ENCODE measurements at regions of chr17 and their contacts with region 1.

Region 1: GRCh38 chr17:6913608-6914443 is 82.0 kb upstream of the ALOX12 start:
- DNase-seq: peak; percentile 78
- H3K4me3 Mint-ChIP-seq: peak overlapping the region; percentile 52
- H3K27ac Mint-ChIP-seq: peak overlapping the region; percentile 25
- H3K4me1 Mint-ChIP-seq: peaks cover 33% of the 10 kb centered on the region
- H3K27me3 Mint-ChIP-seq: peaks cover 30% of the 10 kb centered on the region

Region 2: DNA sequence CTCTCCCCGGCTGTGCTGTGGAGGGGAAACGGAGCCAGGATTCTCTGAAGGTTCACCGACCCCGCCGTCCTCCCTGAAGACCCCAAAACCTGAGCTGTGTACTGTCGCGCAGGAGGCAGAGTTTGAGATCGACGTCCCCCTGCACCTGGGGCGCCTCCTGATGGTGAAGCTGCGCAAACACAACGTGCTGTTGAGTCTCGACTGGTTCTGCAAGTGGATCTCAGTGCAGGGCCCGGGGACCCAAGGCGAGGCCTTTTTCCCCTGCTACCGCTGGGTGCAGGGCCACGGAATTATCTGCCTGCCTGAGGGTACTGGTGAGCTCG is 19.7 kb before region 1 on chr17:
- CTCF ChIA-PET with region 1: interaction called, 10 read pairs
- POLR2A ChIA-PET with region 1: no interaction called
- DNase-seq: peak; percentile 16
- H3K4me3 Mint-ChIP-seq: no peak overlapping the region
- H3K27ac Mint-ChIP-seq: no peak overlapping the region
- H3K4me1 Mint-ChIP-seq: no peaks in the 10 kb centered on the region
- H3K27me3 Mint-ChIP-seq: peaks cover 41% of the 10 kb centered on the region

Region 3: GRCh38 chr17:7004398-7005253 is 90.8 kb after region 1 on chr17:
- CTCF ChIA-PET with region 1: interaction called, 29 read pairs
- POLR2A ChIA-PET with region 1: no interaction called
- DNase-seq: peak; percentile 70
- H3K4me3 Mint-ChIP-seq: no peak overlapping the region
- H3K27ac Mint-ChIP-seq: peak overlapping the region; percentile 15
- H3K4me1 Mint-ChIP-seq: peaks cover 23% of the 10 kb centered on the region
- H3K27me3 Mint-ChIP-seq: no peaks in the 10 kb centered on the region

Region 4: DNA sequence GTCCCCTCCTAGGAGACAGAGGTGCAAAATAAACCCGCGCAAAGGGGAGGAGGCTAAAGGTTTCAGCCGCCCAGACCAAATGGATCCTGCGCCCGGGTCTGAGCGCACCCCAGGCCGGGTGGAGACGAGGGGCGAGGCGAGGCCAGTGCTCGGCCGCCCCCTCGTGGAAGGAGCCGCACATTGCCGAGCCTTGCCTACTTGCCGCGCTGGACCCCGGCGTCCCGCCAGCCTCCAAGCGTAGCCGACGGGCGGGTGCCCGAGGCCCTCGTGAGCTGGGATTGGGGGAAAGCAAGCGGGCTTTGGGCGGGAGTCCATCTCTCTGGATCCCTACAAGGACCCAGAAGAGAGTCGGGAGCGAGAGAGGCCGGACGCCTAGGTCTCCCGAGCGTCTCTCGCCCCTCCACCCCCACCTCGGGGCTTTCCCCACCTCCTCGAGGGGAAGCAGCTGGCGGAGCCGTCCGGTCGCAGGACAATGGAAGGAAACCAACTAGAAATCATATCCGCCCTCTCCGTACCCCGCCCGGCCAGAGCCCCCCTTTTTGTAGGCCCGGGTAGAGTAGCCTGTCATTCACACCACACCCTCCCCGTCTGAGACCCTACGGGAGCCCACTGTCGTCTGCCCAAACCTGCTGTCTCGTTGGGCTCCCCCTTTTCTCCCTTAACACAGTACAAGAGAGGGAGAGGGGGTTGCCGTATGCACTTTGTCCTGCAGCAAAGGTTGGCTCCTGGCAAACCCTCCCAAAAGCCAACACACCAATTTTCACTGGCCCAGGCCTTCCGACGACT is 108.4 kb after region 1 on chr17:
- CTCF ChIA-PET with region 1: interaction called, 18 read pairs
- POLR2A ChIA-PET with region 1: no interaction called
- DNase-seq: peak; percentile 75
- H3K4me3 Mint-ChIP-seq: peak overlapping the region; percentile 22
- H3K27ac Mint-ChIP-seq: peak overlapping the region; percentile 79
- H3K4me1 Mint-ChIP-seq: peaks cover 60% of the 10 kb centered on the region
- H3K27me3 Mint-ChIP-seq: peaks cover 4% of the 10 kb centered on the region